GM23248 (cell line): ENCODE measurements at regions of chr1 and their contacts with region 1.

Region 1: GRCh38 chr1:70509996-70510876 is 99.2 kb downstream of the CTH start:
- DNase-seq: peak; percentile 98
- H3K4me3 ChIP-seq: 0 out of 2 replicates have a peak overlapping the region, but pooled peaks have one; percentile 22
- H3K27ac ChIP-seq: peak overlapping the region; percentile 63
- H3K4me1 ChIP-seq: peaks cover 15% of the 10 kb centered on the region
- H3K27me3 ChIP-seq: no peaks in the 10 kb centered on the region

Region 2: GRCh38 chr1:70436622-70437251 is 73.5 kb before region 1 on chr1:
- in situ Hi-C with region 1: loop called (anchors 10 kb)
- DNase-seq: peak; percentile 61
- H3K4me3 ChIP-seq: no peak overlapping the region
- H3K27ac ChIP-seq: no peak overlapping the region
- H3K4me1 ChIP-seq: no peaks in the 10 kb centered on the region
- H3K27me3 ChIP-seq: no peaks in the 10 kb centered on the region

Region 3: GRCh38 chr1:70764747-70765146 is 254.5 kb after region 1 on chr1:
- in situ Hi-C with region 1: no loop called
- DNase-seq: peak; percentile 75
- H3K4me3 ChIP-seq: no peak overlapping the region
- H3K27ac ChIP-seq: no peak overlapping the region
- H3K4me1 ChIP-seq: peaks cover 38% of the 10 kb centered on the region
- H3K27me3 ChIP-seq: no peaks in the 10 kb centered on the region

Region 4: GRCh38 chr1:70819785-70820184 is 309.5 kb after region 1 on chr1:
- in situ Hi-C with region 1: no loop called
- DNase-seq: peak; percentile 3
- H3K4me3 ChIP-seq: no peak overlapping the region
- H3K27ac ChIP-seq: no peak overlapping the region
- H3K4me1 ChIP-seq: peaks cover 14% of the 10 kb centered on the region
- H3K27me3 ChIP-seq: no peaks in the 10 kb centered on the region